Colonic mucosa (tissue), 4 donors: ENCODE measurements at regions of chr13 and their contacts with region 1.

Region 1: DNA sequence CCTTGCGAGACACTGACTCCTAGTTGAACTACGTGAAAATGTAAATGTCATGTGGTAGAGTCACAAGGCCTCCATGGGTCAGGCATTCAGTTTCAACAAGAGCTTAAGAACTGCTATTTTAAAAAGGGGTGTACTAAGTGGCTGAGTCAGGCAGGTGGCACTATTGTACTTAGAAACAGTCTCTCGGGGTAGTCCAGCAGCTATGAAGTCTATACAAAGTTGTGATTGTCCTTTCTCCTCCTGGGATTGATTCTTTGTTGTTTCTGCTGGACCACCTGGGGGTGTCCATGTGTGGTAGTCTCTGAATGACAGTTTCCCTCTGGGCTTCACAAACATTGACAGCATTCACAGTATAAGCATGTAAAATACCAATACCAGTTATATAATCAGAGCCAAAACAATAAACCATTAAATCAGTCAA is 33.0 kb downstream of the UGGT2 start:
- DNase-seq: peak; percentile 55
- H3K4me3 ChIP-seq: no peak overlapping the region
- H3K27ac ChIP-seq: peak overlapping the region; percentile 2
- H3K4me1 ChIP-seq: no peaks in the 10 kb centered on the region
- H3K27me3 ChIP-seq: no peaks in the 10 kb centered on the region
- CTCF ChIP-seq: peak; percentile 58

Region 2: DNA sequence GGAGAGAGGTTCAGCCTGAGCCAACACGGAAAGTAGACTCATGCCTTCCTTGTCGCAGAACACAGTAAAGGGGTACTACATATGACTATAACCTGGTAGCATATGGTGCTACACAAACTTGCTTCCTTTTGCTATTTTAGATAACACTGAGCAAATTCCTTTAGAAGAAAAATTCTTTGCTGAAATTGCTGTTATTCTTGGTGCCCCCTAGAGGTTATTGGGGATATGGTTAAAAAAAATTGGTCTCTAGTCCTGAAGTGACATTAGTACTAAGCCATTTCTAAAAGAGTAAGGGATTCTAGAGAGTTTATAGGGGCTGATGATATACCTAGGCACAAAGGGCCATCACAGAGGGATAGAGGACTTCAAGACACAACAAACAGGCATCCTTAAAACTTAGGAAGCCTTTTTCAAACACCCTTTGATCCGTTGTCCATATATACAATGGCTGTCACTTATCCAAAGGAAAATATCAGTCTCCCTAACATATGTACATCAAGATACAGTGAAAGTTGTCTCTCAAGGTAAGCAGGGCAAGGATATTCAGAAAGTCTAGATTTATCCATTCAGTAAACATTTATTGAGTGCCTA is 55.9 kb after region 1 on chr13:
- intact Hi-C with region 1: loop called (anchors 10 kb)
- DNase-seq: no peak
- H3K4me3 ChIP-seq: no peak overlapping the region
- H3K27ac ChIP-seq: no peak overlapping the region
- H3K4me1 ChIP-seq: no peaks in the 10 kb centered on the region
- H3K27me3 ChIP-seq: no peaks in the 10 kb centered on the region
- CTCF ChIP-seq: no peak

Region 3: GRCh38 chr13:96450326-96451020 is 430.3 kb after region 1 on chr13:
- intact Hi-C with region 1: no loop called
- DNase-seq: no peak
- H3K4me3 ChIP-seq: no peak overlapping the region
- H3K27ac ChIP-seq: no peak overlapping the region
- H3K4me1 ChIP-seq: no peaks in the 10 kb centered on the region
- H3K27me3 ChIP-seq: no peaks in the 10 kb centered on the region
- CTCF ChIP-seq: no peak

Region 4: DNA sequence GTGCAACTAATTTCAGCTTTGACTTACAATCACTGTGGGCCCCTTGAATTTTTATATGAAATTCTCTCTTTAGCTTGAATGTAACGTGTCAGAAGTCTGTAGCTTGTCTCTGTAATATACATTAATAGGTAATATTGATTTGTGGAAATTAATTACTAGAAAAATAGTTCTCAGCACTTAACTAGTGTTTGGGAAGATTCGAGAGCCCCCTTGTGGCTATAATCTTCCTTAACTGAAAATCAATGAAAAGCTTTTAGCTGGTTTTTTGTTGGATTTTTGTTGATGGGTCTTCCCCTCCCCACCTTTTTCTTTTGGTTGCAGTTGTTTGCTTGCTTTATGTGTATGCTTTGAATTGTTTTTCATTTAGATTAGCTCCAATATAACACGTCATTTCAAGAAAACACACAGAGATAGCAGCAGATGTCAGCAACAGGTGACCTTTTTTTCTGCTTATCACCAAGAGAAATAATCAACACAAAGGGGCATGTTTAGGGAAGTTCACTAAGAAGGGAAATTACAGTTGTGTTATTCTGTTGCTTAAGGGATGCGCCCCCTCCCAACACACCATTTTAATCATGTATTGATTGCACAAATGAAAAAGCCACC is 797.3 kb after region 1 on chr13:
- intact Hi-C with region 1: loop called (anchors 5 kb)
- DNase-seq: no peak
- H3K4me3 ChIP-seq: no peak overlapping the region
- H3K27ac ChIP-seq: no peak overlapping the region
- H3K4me1 ChIP-seq: no peaks in the 10 kb centered on the region
- H3K27me3 ChIP-seq: no peaks in the 10 kb centered on the region
- CTCF ChIP-seq: peak; percentile 15